ENCODE measurements at regions of chr17 and their contacts with region 1.

Region 1: GRCh38 chr17:65988081-65988850 is 203.7 kb downstream of the CEP112 start:
- DNase-seq: peak; percentile 66
- ATAC-seq: peak; percentile 97
- H3K4me3 ChIP-seq: no peak overlapping the region
- H3K27ac ChIP-seq: no peak overlapping the region
- H3K4me1 ChIP-seq: no peaks in the 10 kb centered on the region
- H3K27me3 ChIP-seq: no peaks in the 10 kb centered on the region
- CTCF ChIP-seq: peak; percentile 71 to 95 (median 89)
- POLR2A ChIP-seq: no peak
- RAD21 ChIP-seq: peak; percentile 95

Region 2: GRCh38 chr17:65231662-65232335 is 756.5 kb before region 1 on chr17:
- CTCF ChIA-PET with region 1: interaction called, 25 read pairs
- POLR2A ChIA-PET with region 1: no interaction called
- RAD21 ChIA-PET with region 1: interaction called in 1 of 2 experiments, 5 read pairs
- intact Hi-C with region 1: loop called (anchors 1 kb)
- DNase-seq: peak; percentile 74
- ATAC-seq: peak; percentile 92
- H3K4me3 ChIP-seq: no peak overlapping the region
- H3K27ac ChIP-seq: no peak overlapping the region
- H3K4me1 ChIP-seq: peaks cover 24 to 32% of the 10 kb centered on the region in 2 experiments
- H3K27me3 ChIP-seq: no peaks in the 10 kb centered on the region
- CTCF ChIP-seq: peak; percentile 88 to 97 (median 95)
- POLR2A ChIP-seq: no peak
- RAD21 ChIP-seq: peak; percentile 98

Region 3: GRCh38 chr17:65278050-65278819 is 710.0 kb before region 1 on chr17:
- CTCF ChIA-PET with region 1: interaction called, 3 read pairs
- POLR2A ChIA-PET with region 1: no interaction called
- RAD21 ChIA-PET with region 1: no interaction called
- intact Hi-C with region 1: loop called (anchors 1 kb)
- DNase-seq: peak; percentile 57
- ATAC-seq: peak; percentile 99
- H3K4me3 ChIP-seq: no peak overlapping the region
- H3K27ac ChIP-seq: no peak overlapping the region
- H3K4me1 ChIP-seq: no peaks in the 10 kb centered on the region; a peak in 1 of 4 replicates
- H3K27me3 ChIP-seq: no peaks in the 10 kb centered on the region
- CTCF ChIP-seq: peak; percentile 59 to 94 (median 91); a peak in 5 of 6 replicates
- POLR2A ChIP-seq: no peak
- RAD21 ChIP-seq: peak; percentile 90

Region 4: GRCh38 chr17:65294179-65294720 is 694.0 kb before region 1 on chr17:
- CTCF ChIA-PET with region 1: interaction called, 22 read pairs
- POLR2A ChIA-PET with region 1: no interaction called
- RAD21 ChIA-PET with region 1: interaction called in 1 of 2 experiments, 5 read pairs
- intact Hi-C with region 1: loop called (anchors 1 kb)
- DNase-seq: peak; percentile 72
- ATAC-seq: peak; percentile 100
- H3K4me3 ChIP-seq: no peak overlapping the region
- H3K27ac ChIP-seq: no peak overlapping the region
- H3K4me1 ChIP-seq: peaks cover 4 to 16% of the 10 kb centered on the region in 2 experiments; a peak in 3 of 4 replicates
- H3K27me3 ChIP-seq: no peaks in the 10 kb centered on the region
- CTCF ChIP-seq: peak; percentile 88 to 97 (median 96)
- POLR2A ChIP-seq: no peak
- RAD21 ChIP-seq: peak; percentile 98

Region 5: DNA sequence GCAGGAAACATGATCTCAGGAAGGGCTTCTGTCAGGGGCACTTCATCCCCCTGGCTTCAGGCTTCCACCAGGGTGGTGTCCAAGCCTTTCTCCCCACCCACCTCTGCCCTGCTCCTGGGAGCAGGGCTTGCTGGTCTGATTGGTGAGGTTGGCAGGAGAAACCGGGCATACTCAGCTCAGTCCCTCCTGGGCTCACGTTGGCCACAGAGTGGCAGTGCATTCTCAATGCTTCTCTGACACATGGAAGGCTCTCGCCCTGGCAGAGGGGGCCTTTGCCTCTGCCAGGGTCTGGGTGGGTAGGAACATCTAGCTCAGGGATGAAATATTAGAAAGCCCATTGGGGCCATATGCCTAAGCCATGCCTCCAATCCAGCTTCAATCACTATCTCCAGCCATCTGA is 569.6 kb before region 1 on chr17:
- CTCF ChIA-PET with region 1: no interaction called
- POLR2A ChIA-PET with region 1: no interaction called
- RAD21 ChIA-PET with region 1: no interaction called
- intact Hi-C with region 1: loop called (anchors 10 kb)
- DNase-seq: no peak
- ATAC-seq: peak; percentile 78
- H3K4me3 ChIP-seq: no peak overlapping the region
- H3K27ac ChIP-seq: no peak overlapping the region
- H3K4me1 ChIP-seq: no peaks in the 10 kb centered on the region; a peak in 1 of 4 replicates
- H3K27me3 ChIP-seq: no peaks in the 10 kb centered on the region
- CTCF ChIP-seq: peak; percentile 25 to 36 (median 30); a peak in 3 of 6 replicates
- POLR2A ChIP-seq: no peak
- RAD21 ChIP-seq: peak; percentile 69

Region 6: DNA sequence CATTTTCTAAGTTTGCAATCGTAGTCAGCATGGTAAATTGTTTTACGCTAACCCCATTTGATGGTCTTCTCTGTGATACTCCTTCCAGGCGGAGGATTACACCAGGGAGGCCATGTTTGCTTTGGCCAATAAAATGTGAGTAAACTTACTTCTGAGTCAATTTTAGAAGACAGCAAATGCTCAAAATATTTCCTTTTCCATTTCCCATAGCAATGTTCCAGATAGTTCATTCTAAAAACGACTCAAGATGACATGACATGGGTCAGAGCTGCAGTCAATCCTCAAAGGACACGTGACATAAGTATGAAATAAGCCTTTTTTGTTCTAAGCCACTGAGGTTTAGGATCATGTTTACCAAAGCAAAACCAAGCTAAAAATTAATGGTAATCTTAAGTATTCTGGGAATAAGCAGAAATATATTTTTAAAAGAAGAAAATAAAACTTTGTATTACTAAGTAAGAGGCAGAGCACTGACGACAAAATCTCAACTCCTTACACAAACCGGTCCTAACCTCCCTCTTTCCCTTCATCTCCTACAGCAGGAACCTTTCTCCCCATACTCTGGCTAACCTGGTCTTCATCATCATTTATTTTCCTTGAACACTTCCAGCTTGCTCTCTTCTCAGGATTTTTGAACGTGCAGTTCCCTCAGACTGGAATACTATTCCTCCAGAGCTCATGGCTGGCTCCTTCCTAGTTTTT is 62.5 kb before region 1 on chr17:
- CTCF ChIA-PET with region 1: no interaction called
- POLR2A ChIA-PET with region 1: no interaction called
- RAD21 ChIA-PET with region 1: no interaction called
- intact Hi-C with region 1: no loop called
- DNase-seq: no peak
- ATAC-seq: no peak
- H3K4me3 ChIP-seq: no peak overlapping the region
- H3K27ac ChIP-seq: no peak overlapping the region
- H3K4me1 ChIP-seq: no peaks in the 10 kb centered on the region
- H3K27me3 ChIP-seq: no peaks in the 10 kb centered on the region
- CTCF ChIP-seq: no peak
- POLR2A ChIP-seq: no peak
- RAD21 ChIP-seq: no peak

Region 7: DNA sequence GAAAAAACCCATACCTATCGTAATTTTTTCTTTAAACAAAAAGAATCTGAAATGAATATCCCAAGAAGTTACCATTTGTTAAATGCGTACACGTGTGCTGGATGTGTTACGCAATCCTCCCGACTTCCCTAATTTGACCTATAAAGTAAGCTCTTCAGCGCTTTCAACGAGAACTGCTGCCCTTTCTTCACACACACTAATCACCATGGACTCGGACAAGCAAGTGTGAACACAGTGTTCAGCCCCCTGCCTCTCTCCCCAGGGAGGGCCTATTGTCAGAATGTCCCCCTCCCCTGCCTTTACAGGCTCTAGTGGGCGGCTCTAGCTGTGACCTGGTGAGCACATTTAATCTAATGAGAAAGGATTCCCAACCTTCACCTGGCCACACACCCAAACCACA is 12.4 kb before region 1 on chr17:
- CTCF ChIA-PET with region 1: no interaction called
- POLR2A ChIA-PET with region 1: no interaction called
- RAD21 ChIA-PET with region 1: no interaction called
- intact Hi-C with region 1: no loop called
- DNase-seq: no peak
- ATAC-seq: no peak
- H3K4me3 ChIP-seq: no peak overlapping the region
- H3K27ac ChIP-seq: no peak overlapping the region
- H3K4me1 ChIP-seq: no peaks in the 10 kb centered on the region
- H3K27me3 ChIP-seq: no peaks in the 10 kb centered on the region
- CTCF ChIP-seq: no peak
- POLR2A ChIP-seq: no peak
- RAD21 ChIP-seq: no peak